AG04450 (cell line): ENCODE measurements at regions of chr2 and their contacts with region 1.

Region 1: GRCh38 chr2:108583903-108584520 is 49.7 kb downstream of the LIMS1 start:
- DNase-seq: no peak
- H3K4me3 ChIP-seq: no peak overlapping the region
- H3K27ac ChIP-seq: no peak overlapping the region
- H3K27me3 ChIP-seq: no peaks in the 10 kb centered on the region
- CTCF ChIP-seq: peak; percentile 82

Region 2: DNA sequence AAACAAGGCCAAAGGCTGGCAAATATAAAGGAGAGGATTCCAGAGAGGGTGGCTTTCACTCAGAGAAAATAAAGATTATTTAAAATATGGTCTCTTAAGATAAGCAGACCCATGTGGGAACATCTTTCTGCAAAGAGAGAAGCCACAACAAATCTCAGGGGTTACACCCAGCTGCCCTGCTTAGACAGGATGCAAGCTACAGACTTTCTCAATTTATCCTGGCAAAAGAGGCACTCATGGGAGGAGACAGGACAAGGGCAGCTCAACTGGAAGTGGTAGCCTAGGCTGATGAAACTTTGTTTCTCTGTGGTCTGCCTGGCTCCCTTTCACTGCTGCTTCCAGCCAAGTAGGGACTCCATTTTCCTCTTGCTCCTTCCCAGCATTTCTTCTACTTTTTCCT is 232.1 kb before region 1 on chr2:
- CTCF ChIA-PET with region 1: interaction called, 19 read pairs
- POLR2A ChIA-PET with region 1: no interaction called
- DNase-seq: no peak
- H3K4me3 ChIP-seq: no peak overlapping the region
- H3K27ac ChIP-seq: no peak overlapping the region
- H3K27me3 ChIP-seq: peaks cover 4% of the 10 kb centered on the region
- CTCF ChIP-seq: no peak

Region 3: GRCh38 chr2:108492364-108492763 is 91.6 kb before region 1 on chr2:
- CTCF ChIA-PET with region 1: interaction called, 13 read pairs
- POLR2A ChIA-PET with region 1: no interaction called
- DNase-seq: peak; percentile 70
- H3K4me3 ChIP-seq: no peak overlapping the region
- H3K27ac ChIP-seq: no peak overlapping the region
- H3K27me3 ChIP-seq: no peaks in the 10 kb centered on the region
- CTCF ChIP-seq: no peak

Region 4: GRCh38 chr2:108542071-108542470 is 41.9 kb before region 1 on chr2:
- CTCF ChIA-PET with region 1: interaction called, 13 read pairs
- POLR2A ChIA-PET with region 1: no interaction called
- DNase-seq: no peak
- H3K4me3 ChIP-seq: no peak overlapping the region
- H3K27ac ChIP-seq: no peak overlapping the region
- H3K27me3 ChIP-seq: no peaks in the 10 kb centered on the region
- CTCF ChIP-seq: no peak

Region 5: DNA sequence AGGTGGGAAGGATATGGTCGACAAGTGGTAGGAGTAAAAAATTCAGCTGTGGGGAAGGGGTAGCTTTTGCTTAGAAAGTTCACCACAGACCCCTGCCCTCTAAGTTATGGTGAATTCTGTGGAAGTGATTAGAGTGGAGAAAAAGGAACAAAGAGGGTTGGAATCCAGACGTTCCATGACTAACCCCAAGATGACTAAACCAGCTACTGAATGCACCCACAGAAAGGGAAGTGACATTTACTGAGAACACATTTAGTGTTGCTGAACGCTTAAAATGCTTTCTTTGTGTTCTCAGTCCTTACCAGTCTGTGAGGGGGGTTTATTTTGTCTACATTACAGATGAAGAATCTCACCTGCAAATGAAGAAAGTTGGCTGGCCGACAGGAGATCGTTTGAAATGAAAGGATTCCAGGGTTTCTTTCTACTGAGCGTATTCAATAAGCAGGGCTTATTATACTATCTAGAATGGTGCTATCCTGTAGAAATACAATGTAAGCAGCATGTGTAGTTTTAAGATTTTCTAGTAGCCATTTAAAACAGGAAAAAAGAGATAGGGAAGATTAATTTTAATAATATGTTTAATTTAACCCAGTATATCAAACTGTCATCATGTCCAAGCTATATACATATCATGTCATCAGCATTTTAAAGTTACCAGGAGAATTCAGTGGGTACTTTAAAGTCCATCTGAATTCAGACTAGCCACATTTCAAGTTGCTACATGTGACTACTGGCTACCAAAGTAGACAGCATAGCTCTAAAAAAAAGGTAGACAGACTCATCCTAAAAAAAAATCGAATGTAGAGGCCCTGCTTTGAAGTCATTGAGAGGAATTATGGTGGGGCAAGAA is 10.3 kb after region 1 on chr2:
- CTCF ChIA-PET with region 1: interaction called, 27 read pairs
- POLR2A ChIA-PET with region 1: interaction called, 5 read pairs
- DNase-seq: no peak
- H3K4me3 ChIP-seq: no peak overlapping the region
- H3K27ac ChIP-seq: peak overlapping the region; percentile 94
- H3K27me3 ChIP-seq: no peaks in the 10 kb centered on the region
- CTCF ChIP-seq: no peak